Endothelial cell of umbilical vein (primary cell): ENCODE measurements at regions of chr7 and their contacts with region 1.

Region 1: GRCh38 chr7:44257618-44258422 is 57.0 kb downstream of the YKT6 start:
- DNase-seq: peak; percentile 89
- H3K4me3 ChIP-seq: no peak overlapping the region
- H3K27ac ChIP-seq: peak overlapping the region; percentile 86
- H3K4me1 ChIP-seq: peaks cover 29% of the 10 kb centered on the region
- H3K27me3 ChIP-seq: no peaks in the 10 kb centered on the region
- CTCF ChIP-seq: no peak
- POLR2A ChIP-seq: no peak

Region 2: DNA sequence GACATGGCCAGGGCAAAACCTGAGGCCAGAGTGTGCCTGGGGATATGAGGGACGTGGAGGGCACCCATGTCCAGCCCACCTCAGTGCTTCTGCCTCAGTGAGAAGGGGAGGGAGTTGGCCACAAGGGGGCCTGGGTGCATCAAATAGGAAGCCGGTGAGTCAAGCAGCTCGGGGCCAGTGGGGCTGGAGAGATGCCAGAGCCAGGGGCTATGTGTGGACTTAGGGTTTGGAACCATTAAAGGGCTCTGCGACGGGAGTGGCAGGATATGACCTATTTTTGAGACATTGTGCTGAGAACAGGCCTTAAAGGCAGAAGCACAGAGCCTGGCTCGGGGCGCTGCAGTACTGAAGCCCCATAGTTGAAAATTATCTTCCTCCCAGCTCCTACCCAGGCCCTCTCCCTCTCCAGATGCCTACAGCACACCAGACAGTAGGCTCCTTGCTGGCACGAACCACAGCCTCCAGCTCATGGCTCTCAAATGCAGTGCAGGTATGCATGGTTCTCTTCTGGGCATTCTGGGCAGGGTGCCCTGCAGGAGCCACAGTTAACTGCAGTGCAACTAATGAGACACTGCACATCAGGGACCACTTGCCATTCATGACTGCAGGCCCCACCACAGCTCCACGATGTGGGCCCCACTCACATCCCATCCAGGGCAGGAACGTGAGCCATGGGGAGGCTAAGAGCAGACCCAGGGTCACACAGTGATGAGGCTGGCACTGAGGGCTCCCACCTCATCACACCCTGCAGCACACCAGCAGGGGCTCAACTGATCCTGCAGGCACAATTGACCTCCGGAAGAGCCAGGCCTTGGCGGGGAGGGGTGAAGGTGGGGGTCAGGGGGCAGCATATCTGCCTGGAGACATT is 185.2 kb before region 1 on chr7:
- CTCF ChIA-PET with region 1: no interaction called
- POLR2A ChIA-PET with region 1: no interaction called
- dilution Hi-C with region 1: no loop called
- intact Hi-C with region 1: loop called (anchors 5 kb)
- DNase-seq: peak; percentile 87
- H3K4me3 ChIP-seq: no peak overlapping the region
- H3K27ac ChIP-seq: peak overlapping the region; percentile 95
- H3K4me1 ChIP-seq: peaks cover 27% of the 10 kb centered on the region
- H3K27me3 ChIP-seq: no peaks in the 10 kb centered on the region
- CTCF ChIP-seq: peak; percentile 84 to 91
- POLR2A ChIP-seq: peak; percentile 54

Region 3: DNA sequence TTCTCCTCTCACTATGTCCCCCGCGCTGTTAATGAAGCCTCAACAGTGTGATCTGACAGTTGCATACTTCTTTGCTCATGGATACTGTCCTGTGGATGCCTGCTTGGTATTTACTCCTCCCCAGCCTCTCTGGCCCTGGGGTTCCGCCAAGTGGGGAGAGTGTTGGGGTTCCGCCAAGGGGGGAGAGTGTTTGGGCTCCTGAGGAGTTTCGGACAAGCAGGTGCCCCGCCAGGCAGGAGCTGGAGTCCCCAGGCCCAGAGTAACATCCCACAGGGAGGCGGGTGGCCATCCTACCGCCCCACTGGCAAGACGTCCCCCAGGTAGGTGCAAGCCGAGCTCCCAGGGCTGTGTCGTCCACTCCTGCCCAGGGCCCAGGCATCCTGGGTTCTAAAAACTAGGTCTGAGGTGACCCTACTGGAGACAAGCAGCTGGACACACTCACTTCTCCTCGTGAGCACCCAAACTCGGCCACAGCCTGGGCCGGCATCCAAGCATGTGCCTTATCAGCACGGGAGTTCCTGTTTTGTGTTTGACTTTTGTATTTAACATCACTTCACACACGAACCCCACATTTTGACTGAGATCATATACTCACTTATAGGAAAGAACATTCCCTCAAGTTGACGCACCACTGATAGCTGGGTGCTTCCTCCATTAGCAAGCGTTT is 33.4 kb after region 1 on chr7:
- CTCF ChIA-PET with region 1: interaction called, 5 read pairs
- POLR2A ChIA-PET with region 1: no interaction called
- dilution Hi-C with region 1: no loop called
- intact Hi-C with region 1: loop called (anchors 1 kb)
- DNase-seq: peak; percentile 85
- H3K4me3 ChIP-seq: no peak overlapping the region
- H3K27ac ChIP-seq: peak overlapping the region; percentile 33
- H3K4me1 ChIP-seq: peaks cover 14% of the 10 kb centered on the region
- H3K27me3 ChIP-seq: peaks cover 0 to 2% of the 10 kb centered on the region in 2 experiments
- CTCF ChIP-seq: no peak
- POLR2A ChIP-seq: no peak

Region 4: DNA sequence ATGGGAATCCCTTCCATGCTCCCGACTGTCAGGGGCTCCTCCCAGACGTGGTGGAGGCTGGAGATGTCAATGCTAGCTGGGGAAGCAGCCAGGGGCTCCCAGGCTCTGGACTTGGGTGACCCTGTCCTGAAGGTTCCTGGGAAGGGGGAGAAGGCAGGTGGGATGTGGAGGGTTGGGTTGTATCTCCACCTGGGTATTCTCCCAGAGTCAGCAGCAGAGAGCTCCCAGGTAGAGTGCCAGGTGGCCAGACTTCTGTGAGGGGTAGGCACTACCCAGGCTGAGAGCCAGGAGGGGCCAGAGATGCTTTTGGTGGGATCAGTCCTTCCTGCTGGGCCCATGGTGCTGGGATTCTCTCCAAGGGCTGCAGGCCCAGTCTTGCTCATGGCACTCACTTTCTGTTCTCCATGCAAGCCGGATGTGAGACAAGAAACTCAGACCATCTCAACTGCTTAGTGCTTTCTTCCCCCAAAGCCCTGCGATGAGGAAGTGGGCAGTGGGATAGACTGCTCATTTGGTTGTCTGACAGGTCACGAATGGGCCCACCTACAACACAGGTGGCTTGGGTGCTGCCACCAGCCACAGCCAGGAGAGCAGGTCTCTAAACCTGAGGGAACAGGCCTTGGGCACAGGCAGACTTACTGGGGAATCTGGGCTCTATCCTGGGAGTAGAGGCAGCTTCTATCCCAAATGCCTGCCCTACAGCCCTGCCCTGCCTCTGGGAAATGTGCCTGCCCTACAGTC is 120.0 kb after region 1 on chr7:
- CTCF ChIA-PET with region 1: no interaction called
- POLR2A ChIA-PET with region 1: no interaction called
- dilution Hi-C with region 1: no loop called
- intact Hi-C with region 1: loop called (anchors 2 kb)
- DNase-seq: no peak
- H3K4me3 ChIP-seq: no peak overlapping the region
- H3K27ac ChIP-seq: peak overlapping the region; percentile 71
- H3K4me1 ChIP-seq: peaks cover 51% of the 10 kb centered on the region
- H3K27me3 ChIP-seq: no peaks in the 10 kb centered on the region
- CTCF ChIP-seq: no peak
- POLR2A ChIP-seq: no peak

Region 5: DNA sequence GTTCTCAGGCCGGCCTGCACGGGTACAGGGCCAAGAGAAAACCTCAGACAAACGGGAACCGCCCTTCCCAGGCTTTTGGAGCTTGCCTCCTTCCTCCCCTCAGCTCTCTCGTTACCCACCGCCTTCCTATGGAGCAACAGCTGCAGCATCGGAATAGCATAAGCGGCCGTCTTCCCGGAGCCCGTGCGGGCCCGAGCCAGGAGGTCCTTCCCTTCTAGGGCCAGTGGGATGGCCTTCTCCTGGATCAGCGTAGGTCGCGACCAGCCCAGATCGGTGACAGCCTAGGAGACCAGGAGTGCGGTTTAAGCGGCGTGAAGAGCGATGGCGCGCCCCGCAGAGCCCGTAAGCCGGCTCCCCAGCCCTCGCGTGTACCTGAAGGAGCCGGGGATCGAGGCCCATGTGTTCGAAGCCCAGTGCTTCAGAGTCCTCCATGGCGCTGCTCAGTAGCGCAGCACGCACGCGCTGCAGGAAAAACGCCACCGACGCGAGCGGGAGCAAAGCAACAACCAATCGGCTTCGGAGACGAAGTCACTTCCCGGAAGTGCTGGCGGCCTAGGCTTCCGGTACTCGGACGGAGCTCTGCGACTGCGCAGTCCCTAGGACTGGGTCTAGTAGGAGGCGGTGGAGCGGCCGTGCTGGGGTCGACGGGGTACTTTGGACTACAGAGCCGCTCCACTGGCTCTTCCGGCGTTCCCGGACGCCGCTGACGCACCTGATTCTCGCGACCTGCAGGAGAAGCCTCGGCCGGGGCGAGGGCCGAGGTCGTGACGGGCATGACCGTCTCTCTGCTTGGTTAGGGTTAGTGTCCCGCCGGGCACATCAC is 315.9 kb after region 1 on chr7 and contains the start of gene DDX56:
- CTCF ChIA-PET with region 1: no interaction called
- POLR2A ChIA-PET with region 1: no interaction called
- dilution Hi-C with region 1: no loop called
- intact Hi-C with region 1: loop called (anchors 5 kb)
- DNase-seq: peak; percentile 96
- H3K4me3 ChIP-seq: peak within 1 kb of the TSS; percentile 36 to 77 (median 54)
- H3K27ac ChIP-seq: peak within 1 kb of the TSS; percentile 73
- H3K4me1 ChIP-seq: peaks cover 9% of the 10 kb centered on the region
- H3K27me3 ChIP-seq: no peaks in the 10 kb centered on the region
- CTCF ChIP-seq: no peak
- POLR2A ChIP-seq: peak; percentile 95
- total RNA-seq, gene DDX56: 93.4 and 96.6 TPM in 2 replicates